Activated B cell treated with CpG ODN at 0.5 μM for 24 hours (primary cell): ENCODE measurements at regions of chr12 and their contacts with region 1.

Region 1: DNA sequence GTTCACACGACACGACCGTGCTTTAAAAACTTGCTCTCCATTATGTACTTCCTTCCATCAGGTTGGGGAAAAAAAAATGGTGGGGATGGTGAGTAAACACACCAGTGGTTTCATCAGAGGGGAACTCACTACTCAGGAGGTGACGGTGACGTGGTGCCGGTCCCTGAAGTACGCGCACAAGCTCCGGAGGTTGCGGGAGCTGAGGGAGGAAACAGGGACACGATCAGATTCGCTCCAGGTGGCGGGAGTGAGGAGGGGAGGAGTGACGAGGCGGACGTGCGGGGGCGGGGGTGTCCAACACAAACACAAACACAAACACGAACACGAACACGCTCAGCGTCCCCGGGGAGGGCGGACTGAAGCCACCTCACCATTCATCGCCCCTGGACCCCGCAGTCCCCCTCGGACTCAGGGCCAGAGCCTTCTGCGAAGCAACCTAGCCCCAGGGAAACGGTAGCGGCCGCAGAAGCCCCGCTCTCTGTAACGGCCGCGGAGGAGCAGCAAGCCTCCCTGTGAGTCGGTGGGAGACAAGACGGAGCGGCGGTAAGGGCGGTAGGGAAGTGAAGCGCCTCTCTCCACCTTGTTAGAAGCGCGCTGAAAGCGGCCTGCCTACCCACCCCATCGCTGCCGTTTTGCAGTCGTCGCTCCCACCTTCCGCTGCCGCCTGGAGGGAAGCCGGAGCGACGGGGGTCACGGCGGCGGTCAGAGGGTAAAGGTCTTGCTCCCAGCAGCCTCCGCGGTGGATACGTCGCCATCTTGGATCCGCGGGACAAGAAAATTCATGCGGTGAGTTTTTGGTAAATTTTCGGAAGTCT is at the start of gene CNOT2:
- DNase-seq: peak; percentile 86
- ATAC-seq: peak; percentile 88
- H3K4me3 Mint-ChIP-seq: peak within 1 kb of the TSS; percentile 99
- H3K27ac Mint-ChIP-seq: peak within 1 kb of the TSS; percentile 99
- H3K4me1 Mint-ChIP-seq: peaks cover 65% of the 10 kb centered on the region
- H3K27me3 Mint-ChIP-seq: no peaks in the 10 kb centered on the region
- CTCF ChIP-seq: no peak
- total RNA-seq, gene CNOT2: 92.4 and 98.1 TPM in 2 replicates

Region 2: DNA sequence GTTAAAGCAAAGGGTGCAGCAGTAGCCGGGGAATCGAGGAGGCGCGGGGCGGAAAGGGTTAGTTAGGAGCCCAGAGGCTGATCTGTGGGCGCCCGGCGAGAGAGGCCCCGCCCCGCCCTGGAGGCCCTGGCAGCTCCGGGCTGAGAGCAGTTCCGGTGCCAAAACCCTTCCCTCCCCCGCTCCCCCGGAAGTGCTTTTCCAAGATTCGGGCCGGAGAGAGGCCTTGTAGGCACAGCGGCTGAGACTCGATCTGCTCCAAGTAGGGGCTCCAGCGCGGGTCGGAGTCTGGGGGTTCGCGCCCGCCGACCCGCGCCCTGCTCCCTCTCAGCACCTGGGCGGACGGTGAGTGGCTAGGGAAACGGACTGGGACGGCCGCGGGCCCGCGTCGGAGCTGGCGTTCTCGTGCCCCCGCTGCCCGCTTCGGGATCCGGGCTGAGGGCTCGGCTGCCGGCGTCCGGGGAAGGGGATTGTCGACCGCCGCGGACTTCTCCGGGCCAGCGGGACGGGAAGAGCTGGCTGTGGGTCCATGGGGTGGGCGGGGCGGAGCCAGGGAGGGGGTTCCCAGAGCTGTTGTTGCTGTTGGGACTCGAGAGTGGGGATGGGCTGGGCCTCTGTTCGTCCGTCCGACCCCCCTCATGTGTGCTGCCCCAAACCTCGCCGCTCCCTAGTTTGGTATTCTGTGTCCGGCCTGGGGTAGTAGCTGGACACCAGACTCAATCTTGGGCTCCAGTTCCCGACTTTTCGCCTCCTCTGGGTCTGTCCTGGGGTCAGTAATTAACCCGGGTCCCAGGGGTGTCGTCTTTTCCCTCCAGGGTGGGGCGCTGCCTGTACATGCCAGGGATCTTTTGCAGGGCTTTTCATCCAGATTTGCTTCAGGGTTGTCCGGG is 772.5 kb before region 1 on chr12 and contains the start of gene FRS2:
- CTCF ChIA-PET with region 1: no interaction called
- POLR2A ChIA-PET with region 1: no interaction called
- intact Hi-C with region 1: loop called (anchors 5 kb)
- DNase-seq: peak; percentile 77
- ATAC-seq: peak; percentile 98
- H3K4me3 Mint-ChIP-seq: peak within 1 kb of the TSS; percentile 99
- H3K27ac Mint-ChIP-seq: peak within 1 kb of the TSS; percentile 95
- H3K4me1 Mint-ChIP-seq: peaks cover 77% of the 10 kb centered on the region
- H3K27me3 Mint-ChIP-seq: no peaks in the 10 kb centered on the region
- CTCF ChIP-seq: no peak
- total RNA-seq, gene FRS2: 23.2 and 23.8 TPM in 2 replicates

Region 3: DNA sequence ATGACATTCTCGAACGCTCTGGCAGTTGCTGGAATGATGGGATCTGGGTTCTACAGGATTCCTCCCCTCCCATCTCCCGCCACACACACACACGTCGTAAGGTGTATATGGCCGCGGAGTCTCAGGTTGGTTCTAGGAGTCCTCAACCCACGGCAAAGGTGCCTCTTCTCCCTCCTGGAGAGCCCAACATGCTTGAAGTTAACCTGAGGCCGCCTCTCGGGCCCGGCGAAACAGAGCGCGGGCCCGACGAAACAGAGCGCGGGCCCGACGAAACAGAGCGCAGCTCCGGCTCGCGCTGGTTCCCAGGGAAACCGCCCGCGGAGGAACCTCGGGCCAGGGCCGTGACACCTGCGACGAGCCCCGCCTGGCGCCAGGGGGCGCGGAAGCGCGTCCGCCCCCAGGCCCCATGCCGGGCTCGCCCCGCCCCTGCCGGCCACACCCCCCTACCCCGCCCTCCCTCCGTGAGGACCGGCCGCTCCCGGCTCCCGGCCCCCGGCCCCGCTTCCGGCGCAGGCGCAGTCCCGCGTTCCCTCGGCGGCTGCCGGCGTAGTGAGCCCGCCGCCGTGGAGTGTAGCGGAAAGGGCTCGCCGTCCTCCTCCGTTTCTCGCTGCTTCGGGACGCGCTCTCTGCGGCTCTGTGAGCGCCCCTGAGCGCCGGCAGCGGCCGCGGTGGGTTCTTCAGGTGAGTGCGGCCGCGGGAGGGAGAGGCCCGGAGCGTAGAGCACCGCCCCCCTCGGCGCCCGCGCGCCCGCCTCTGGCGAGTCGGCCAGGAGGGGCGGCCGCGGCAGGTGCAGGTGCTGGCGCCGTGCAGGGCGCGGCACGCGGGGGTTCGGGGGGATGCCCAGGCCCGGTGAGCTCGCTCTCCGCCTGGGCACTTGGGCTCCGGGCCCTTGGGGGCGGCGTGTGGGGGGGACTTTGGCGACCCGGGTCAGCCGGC is 504.3 kb before region 1 on chr12 and contains the start of gene RAB3IP:
- CTCF ChIA-PET with region 1: no interaction called
- POLR2A ChIA-PET with region 1: no interaction called
- intact Hi-C with region 1: loop called (anchors 2 kb)
- DNase-seq: peak; percentile 93
- ATAC-seq: peak; percentile 90
- H3K4me3 Mint-ChIP-seq: peak within 1 kb of the TSS; percentile 85
- H3K27ac Mint-ChIP-seq: peak within 1 kb of the TSS; percentile 73
- H3K4me1 Mint-ChIP-seq: peaks cover 19% of the 10 kb centered on the region
- H3K27me3 Mint-ChIP-seq: peaks cover 4% of the 10 kb centered on the region
- CTCF ChIP-seq: no peak
- total RNA-seq, gene RAB3IP: 34.6 and 37.9 TPM in 2 replicates

Region 4: DNA sequence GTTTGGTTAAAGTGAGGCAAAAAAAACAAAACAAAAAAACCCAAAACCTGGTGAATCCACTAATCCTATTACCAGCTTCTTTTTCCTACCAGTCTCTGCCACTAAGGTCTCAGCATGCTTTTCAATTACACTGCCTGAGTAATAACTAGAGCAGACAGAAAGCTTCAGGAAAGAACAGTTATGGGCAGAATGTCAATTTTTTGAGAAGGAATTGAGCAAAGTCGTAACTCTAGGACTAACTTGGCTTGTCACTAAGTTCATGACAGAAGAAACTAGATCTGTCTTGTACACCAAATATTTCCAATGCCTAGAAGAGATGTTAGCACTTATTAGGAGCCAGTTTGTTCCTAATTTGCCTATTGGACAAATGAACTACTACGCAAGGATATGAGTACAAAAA is 148.4 kb before region 1 on chr12:
- CTCF ChIA-PET with region 1: no interaction called
- POLR2A ChIA-PET with region 1: no interaction called
- intact Hi-C with region 1: no loop called
- DNase-seq: no peak
- ATAC-seq: no peak
- H3K4me3 Mint-ChIP-seq: no peak overlapping the region
- H3K27ac Mint-ChIP-seq: no peak overlapping the region
- H3K4me1 Mint-ChIP-seq: no peaks in the 10 kb centered on the region
- H3K27me3 Mint-ChIP-seq: no peaks in the 10 kb centered on the region
- CTCF ChIP-seq: no peak

Region 5: GRCh38 chr12:70365648-70366518 is 123.0 kb after region 1 on chr12 and contains the start of gene KCNMB4:
- CTCF ChIA-PET with region 1: no interaction called
- POLR2A ChIA-PET with region 1: interaction called, 3 read pairs
- intact Hi-C with region 1: loop called (anchors 1 kb)
- DNase-seq: peak; percentile 79
- ATAC-seq: peak; percentile 90
- H3K4me3 Mint-ChIP-seq: peak within 1 kb of the TSS; percentile 91
- H3K27ac Mint-ChIP-seq: no peak within 1 kb of the TSS
- H3K4me1 Mint-ChIP-seq: peaks cover 20% of the 10 kb centered on the region
- H3K27me3 Mint-ChIP-seq: no peaks in the 10 kb centered on the region
- CTCF ChIP-seq: no peak
- total RNA-seq, gene KCNMB4: 0.71 and 0.86 TPM in 2 replicates

Region 6: DNA sequence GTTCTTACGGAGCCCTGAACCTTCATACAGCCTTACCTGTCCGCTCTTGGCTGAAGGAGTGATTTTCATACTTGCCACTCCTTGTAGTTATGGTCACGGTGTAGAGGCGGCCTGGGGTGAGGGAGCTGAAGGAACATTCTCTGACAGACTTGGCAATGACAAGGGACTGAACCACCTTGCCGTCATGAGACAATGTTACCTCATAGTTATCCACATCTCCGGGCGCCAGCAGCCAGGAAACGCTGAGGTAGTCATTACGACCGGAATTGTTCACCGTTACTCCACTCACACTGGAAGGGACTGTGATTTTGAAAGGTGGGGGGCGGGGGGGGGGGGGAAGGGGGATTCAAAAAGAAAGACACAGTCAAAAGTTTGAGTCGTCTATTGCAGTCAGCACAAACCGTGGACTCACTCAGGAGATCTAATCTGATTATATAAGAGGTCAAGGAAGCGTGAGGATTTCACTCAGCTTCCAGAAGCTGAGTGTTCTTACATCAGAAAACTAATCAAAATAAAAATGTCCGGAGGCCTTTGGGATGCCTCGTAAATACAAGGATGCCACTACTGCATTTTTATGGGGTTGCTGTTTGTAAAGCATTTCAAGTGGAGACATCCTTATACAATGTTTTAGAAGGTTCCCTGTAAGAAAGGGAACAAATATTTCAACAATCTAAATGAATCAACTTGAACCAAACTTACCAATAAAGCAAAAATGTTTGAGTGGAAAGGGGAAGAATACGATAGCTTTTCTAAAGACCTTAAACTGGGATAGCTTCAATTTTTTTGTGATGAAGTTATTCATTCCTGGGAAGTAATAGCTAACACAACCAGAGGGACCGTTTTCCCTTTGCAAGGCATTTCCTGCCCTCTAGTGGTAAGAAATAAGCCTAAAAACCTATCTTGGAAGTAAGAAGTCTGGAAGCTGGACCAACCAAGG is 333.7 kb after region 1 on chr12:
- CTCF ChIA-PET with region 1: no interaction called
- POLR2A ChIA-PET with region 1: no interaction called
- intact Hi-C with region 1: loop called (anchors 1 kb)
- DNase-seq: no peak
- ATAC-seq: no peak
- H3K4me3 Mint-ChIP-seq: no peak overlapping the region
- H3K27ac Mint-ChIP-seq: no peak overlapping the region
- H3K4me1 Mint-ChIP-seq: no peaks in the 10 kb centered on the region
- H3K27me3 Mint-ChIP-seq: peaks cover 2% of the 10 kb centered on the region
- CTCF ChIP-seq: no peak

Region 7: GRCh38 chr12:71029302-71029701 is 786.4 kb after region 1 on chr12:
- CTCF ChIA-PET with region 1: no interaction called
- POLR2A ChIA-PET with region 1: no interaction called
- intact Hi-C with region 1: no loop called
- DNase-seq: no peak
- ATAC-seq: no peak
- H3K4me3 Mint-ChIP-seq: no peak overlapping the region
- H3K27ac Mint-ChIP-seq: no peak overlapping the region
- H3K4me1 Mint-ChIP-seq: no peaks in the 10 kb centered on the region
- H3K27me3 Mint-ChIP-seq: no peaks in the 10 kb centered on the region
- CTCF ChIP-seq: no peak

Region 8: GRCh38 chr12:71754461-71755145 is 1511.7 kb after region 1 on chr12 and contains the start of gene RAB21:
- CTCF ChIA-PET with region 1: no interaction called
- POLR2A ChIA-PET with region 1: no interaction called
- intact Hi-C with region 1: loop called (anchors 1 kb)
- DNase-seq: peak; percentile 95
- ATAC-seq: peak; percentile 84
- H3K4me3 Mint-ChIP-seq: peak within 1 kb of the TSS; percentile 96
- H3K27ac Mint-ChIP-seq: peak within 1 kb of the TSS; percentile 97
- H3K4me1 Mint-ChIP-seq: peaks cover 43% of the 10 kb centered on the region
- H3K27me3 Mint-ChIP-seq: no peaks in the 10 kb centered on the region
- CTCF ChIP-seq: no peak
- total RNA-seq, gene RAB21: 112 and 121 TPM in 2 replicates